ENCODE measurements at regions of chr5 and their contacts with region 1.

Region 1: GRCh38 chr5:66186108-66186507 is 42.0 kb downstream of the SREK1 start:
- DNase-seq: no peak
- H3K4me3 ChIP-seq: no peak overlapping the region
- H3K27ac ChIP-seq: no peak overlapping the region
- H3K4me1 ChIP-seq: no peaks in the 10 kb centered on the region
- H3K27me3 ChIP-seq: no peaks in the 10 kb centered on the region
- CTCF ChIP-seq: no peak
- EP300 ChIP-seq: no peak
- POLR2A ChIP-seq: no peak

Region 2: DNA sequence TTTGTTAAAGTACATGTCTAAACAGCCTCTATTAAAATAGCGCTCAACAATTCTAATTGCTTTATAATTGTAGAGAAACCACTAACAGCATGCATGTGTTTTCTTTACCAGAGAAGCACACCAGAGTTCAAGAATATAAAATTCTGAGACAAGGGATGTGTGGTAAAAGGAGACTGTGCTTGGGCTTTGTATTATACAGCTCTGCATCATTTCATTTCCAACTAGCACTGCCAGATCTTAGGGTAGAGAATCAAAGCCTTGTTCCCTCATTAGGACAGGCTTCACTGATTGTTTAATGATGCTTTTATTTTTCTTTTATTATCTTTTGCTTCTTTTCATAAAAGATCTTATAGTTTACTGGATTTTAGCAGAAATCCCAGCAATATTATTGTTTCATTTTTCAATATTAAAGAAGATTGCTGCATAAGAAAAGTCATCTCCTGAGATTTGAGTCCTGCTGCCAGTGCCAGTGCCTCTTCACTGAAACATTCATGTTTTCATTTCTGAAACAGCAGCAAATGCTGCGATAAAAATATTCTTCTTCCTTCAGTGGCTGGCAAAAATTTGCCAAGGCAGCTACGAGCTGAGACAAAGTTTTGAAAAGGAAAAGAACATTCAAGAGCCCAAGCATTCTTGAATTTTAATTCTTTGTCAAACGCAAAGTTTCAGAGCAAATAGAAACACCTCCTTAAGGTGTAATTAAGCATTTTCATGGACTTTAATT is 1538.5 kb after region 1 on chr5:
- in situ Hi-C with region 1: no loop called
- intact Hi-C with region 1: loop called (anchors 5 kb)
- DNase-seq: no peak
- H3K4me3 ChIP-seq: no peak overlapping the region
- H3K27ac ChIP-seq: peak overlapping the region; percentile 2 to 58 (median 56)
- H3K4me1 ChIP-seq: peaks cover 0 to 6% (median 0%) of the 10 kb centered on the region in 4 donors
- H3K27me3 ChIP-seq: no peaks in the 10 kb centered on the region
- CTCF ChIP-seq: no peak
- EP300 ChIP-seq: no peak
- POLR2A ChIP-seq: no peak

Measured in transverse colon (tissue), 4 donors.